Left lung (tissue), 14 donors: ENCODE measurements at regions of chr12 and their contacts with region 1.

Region 1: GRCh38 chr12:40152783-40153383 is 47.0 kb upstream of the SLC2A13 start:
- DNase-seq: peak in 3 of 4 donors; percentile 36 to 59 (median 51)
- ATAC-seq: peak; percentile 67
- H3K4me3 ChIP-seq: no peak overlapping the region
- H3K27ac ChIP-seq: peak overlapping the region in 1 of 2 donors; percentile 43
- H3K4me1 ChIP-seq: peaks cover 0 to 30% of the 10 kb centered on the region in 2 donors
- H3K27me3 ChIP-seq: no peaks in the 10 kb centered on the region
- CTCF ChIP-seq: peak; percentile 75 to 82

Region 2: DNA sequence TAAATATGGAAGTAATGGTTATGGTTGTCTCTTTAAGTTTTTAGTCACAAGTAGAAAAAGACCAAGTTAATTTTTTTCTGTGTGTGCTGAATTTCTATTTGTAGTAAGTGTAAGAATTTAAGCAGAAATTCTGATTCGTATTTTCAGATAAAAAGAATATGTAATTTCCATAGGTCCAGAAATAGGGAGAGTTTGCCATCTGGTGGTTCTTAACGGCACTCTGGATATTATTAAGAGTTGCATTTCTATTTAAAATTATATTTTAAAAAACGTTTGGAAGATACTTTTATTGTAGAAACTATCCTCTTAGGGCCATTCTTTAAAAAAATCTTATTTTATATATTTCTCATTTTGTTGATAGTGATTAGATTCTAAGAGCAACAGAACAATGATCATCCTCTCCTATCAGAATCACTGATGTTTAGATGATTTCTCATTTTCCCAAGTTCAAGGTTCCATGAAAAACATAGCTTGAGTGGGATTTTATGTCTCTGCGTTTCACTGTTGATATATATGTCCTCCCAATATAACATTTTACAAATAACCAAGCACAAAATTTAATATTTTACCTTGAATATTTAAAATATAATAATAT is 160.2 kb after region 1 on chr12:
- intact Hi-C with region 1: loop called in 1 of 2 experiments (anchors 10 kb)
- DNase-seq: peak in 1 of 4 donors; percentile 24
- ATAC-seq: no peak
- H3K4me3 ChIP-seq: no peak overlapping the region
- H3K27ac ChIP-seq: no peak overlapping the region
- H3K4me1 ChIP-seq: no peaks in the 10 kb centered on the region
- H3K27me3 ChIP-seq: no peaks in the 10 kb centered on the region
- CTCF ChIP-seq: peak in 1 of 2 donors; percentile 32